ENCODE measurements at regions of chr10 and their contacts with region 1.

Region 1: GRCh38 chr10:12748186-12748585 is 253.3 kb downstream of the CCDC3 start:
- DNase-seq: no peak
- H3K4me3 ChIP-seq: no peak overlapping the region
- H3K27ac ChIP-seq: no peak overlapping the region
- H3K4me1 ChIP-seq: no peaks in the 10 kb centered on the region
- H3K27me3 ChIP-seq: no peaks in the 10 kb centered on the region
- CTCF ChIP-seq: no peak
- EP300 ChIP-seq: no peak
- POLR2A ChIP-seq: no peak

Region 2: GRCh38 chr10:12466704-12467305 is 281.4 kb before region 1 on chr10:
- intact Hi-C with region 1: no loop called
- DNase-seq: peak; percentile 14
- H3K4me3 ChIP-seq: no peak overlapping the region
- H3K27ac ChIP-seq: no peak overlapping the region
- H3K4me1 ChIP-seq: no peaks in the 10 kb centered on the region
- H3K27me3 ChIP-seq: no peaks in the 10 kb centered on the region
- CTCF ChIP-seq: no peak
- EP300 ChIP-seq: no peak
- POLR2A ChIP-seq: no peak

Region 3: DNA sequence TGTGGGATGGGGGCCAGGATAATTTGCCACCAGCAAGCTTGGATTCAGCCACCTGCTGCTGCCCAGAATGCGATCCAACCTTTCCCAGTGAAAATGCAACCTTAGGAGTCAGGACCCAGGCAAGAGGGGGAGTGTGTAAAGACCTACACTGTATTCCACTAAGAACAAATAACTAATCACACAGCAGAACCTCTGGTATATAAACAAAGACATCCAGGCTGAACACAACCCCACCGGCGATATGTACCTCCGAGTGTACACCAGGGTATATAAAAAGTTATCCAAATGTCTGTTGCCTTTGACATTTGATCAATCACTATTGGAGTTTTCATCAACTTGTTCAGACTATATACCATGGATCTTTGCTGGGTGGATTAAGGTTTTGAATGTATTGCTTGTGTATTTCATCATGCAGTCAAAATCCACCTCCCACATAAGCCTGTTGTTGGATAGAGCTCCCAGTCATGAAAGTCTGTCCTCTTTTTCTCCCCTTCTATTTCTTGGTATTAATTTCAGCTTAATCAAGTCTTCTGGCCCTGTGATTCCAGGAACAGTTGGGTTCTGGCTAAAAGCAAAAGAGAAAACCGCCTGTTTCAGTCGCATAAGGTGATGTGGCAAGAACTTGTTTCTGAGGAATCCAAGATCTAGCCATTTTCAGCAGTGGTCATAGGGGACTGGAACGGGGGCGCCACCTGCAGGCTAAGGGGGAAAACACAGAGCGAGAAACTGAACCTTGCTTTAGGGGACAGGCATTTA is 37.4 kb before region 1 on chr10:
- intact Hi-C with region 1: no loop called
- DNase-seq: peak; percentile 88
- H3K4me3 ChIP-seq: no peak overlapping the region
- H3K27ac ChIP-seq: peak overlapping the region; percentile 81 to 90 (median 86)
- H3K4me1 ChIP-seq: peaks cover 0 to 57% (median 51%) of the 10 kb centered on the region in 4 donors
- H3K27me3 ChIP-seq: no peaks in the 10 kb centered on the region
- CTCF ChIP-seq: peak; percentile 89 to 96 (median 90)
- EP300 ChIP-seq: no peak
- POLR2A ChIP-seq: no peak

Region 4: GRCh38 chr10:12771981-12772760 is 24.0 kb after region 1 on chr10:
- intact Hi-C with region 1: no loop called
- DNase-seq: no peak
- H3K4me3 ChIP-seq: no peak overlapping the region
- H3K27ac ChIP-seq: no peak overlapping the region
- H3K4me1 ChIP-seq: no peaks in the 10 kb centered on the region
- H3K27me3 ChIP-seq: no peaks in the 10 kb centered on the region
- CTCF ChIP-seq: no peak
- EP300 ChIP-seq: no peak
- POLR2A ChIP-seq: no peak

Region 5: DNA sequence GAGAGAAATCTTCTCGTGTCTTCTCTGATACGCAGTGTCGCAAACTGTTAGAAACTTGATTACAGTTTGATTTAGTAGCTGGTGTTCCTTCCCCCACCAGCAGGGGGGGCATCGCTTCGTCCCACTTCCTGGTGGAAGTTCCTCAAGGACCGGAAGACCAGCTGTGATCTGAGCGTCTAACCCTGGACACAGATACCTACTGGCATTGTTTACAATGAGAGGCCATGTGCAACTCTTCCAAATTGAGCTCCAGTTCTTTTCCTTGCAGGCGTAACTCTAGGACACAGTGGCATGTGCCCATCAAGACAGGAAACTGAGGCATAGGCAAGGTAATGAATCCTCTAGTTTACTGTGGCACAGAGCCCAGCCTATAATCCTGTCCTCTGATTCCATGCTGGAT is 34.4 kb after region 1 on chr10:
- intact Hi-C with region 1: loop called (anchors 5 kb)
- DNase-seq: peak; percentile 74
- H3K4me3 ChIP-seq: no peak overlapping the region
- H3K27ac ChIP-seq: peak overlapping the region in 2 of 4 donors; percentile 47 to 52
- H3K4me1 ChIP-seq: peaks cover 0 to 14% (median 0%) of the 10 kb centered on the region in 4 donors
- H3K27me3 ChIP-seq: no peaks in the 10 kb centered on the region
- CTCF ChIP-seq: peak; percentile 16 to 62 (median 54)
- EP300 ChIP-seq: no peak
- POLR2A ChIP-seq: no peak

Measured in sigmoid colon (tissue), 7 donors.